ENCODE measurements at regions of chr1 and their contacts with region 1.

Region 1: GRCh38 chr1:9629445-9630201 is 21.9 kb upstream of the PIK3CD start:
- DNase-seq: peak; percentile 84
- H3K4me3 Mint-ChIP-seq: peak overlapping the region; percentile 87
- H3K27ac Mint-ChIP-seq: peak overlapping the region; percentile 97
- H3K4me1 Mint-ChIP-seq: peaks cover 67% of the 10 kb centered on the region
- H3K27me3 Mint-ChIP-seq: peaks cover 2% of the 10 kb centered on the region

Region 2: DNA sequence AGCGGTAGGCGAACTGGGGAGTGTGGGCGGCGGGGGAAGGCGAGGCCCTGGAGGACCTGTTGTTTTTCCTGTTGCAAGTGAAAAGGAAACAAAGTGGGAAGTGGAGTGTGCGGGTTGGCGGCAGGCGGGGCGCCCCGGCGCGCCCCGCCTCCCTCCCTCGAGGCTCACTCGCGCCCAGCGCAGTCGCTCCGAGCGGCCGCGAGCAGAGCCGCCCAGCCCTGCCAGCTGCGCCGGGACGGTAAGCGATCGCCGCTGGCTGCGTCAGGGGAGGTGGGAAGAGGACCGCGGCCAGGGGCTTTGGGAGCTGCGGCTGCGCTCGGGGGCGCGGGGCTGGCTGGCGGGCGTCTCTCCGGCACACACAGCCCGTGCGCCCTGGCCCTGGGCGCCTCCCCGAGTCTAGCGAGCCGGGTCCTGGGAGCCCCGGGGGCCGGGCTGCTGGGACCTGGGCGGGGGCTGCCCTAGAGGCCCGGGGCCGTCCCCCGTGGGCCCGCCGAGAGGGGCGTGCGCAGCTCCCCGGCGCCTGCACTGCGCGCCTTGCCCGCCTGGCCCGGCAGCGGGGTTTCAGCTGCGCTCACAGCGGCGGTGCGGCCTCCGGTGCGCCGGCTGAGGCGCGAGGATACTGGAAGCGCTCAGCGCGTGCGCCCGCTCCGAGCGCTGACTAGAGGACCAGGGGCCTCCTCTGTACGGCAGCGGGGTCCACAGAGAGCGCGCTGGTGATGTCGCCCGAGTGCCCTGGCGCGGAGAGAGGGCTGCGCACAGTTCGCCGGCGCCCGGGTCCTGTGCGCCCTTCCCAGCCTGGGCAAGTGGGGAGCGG is 22.1 kb after region 1 on chr1 and contains the start of gene PIK3CD:
- CTCF ChIA-PET with region 1: interaction called, 144 read pairs
- POLR2A ChIA-PET with region 1: interaction called, 422 read pairs
- DNase-seq: peak; percentile 59
- H3K4me3 Mint-ChIP-seq: peak within 1 kb of the TSS; percentile 96
- H3K27ac Mint-ChIP-seq: peak within 1 kb of the TSS; percentile 98
- H3K4me1 Mint-ChIP-seq: peaks cover 51% of the 10 kb centered on the region
- H3K27me3 Mint-ChIP-seq: no peaks in the 10 kb centered on the region
- total RNA-seq, gene PIK3CD: 211 to 214 TPM

Region 3: DNA sequence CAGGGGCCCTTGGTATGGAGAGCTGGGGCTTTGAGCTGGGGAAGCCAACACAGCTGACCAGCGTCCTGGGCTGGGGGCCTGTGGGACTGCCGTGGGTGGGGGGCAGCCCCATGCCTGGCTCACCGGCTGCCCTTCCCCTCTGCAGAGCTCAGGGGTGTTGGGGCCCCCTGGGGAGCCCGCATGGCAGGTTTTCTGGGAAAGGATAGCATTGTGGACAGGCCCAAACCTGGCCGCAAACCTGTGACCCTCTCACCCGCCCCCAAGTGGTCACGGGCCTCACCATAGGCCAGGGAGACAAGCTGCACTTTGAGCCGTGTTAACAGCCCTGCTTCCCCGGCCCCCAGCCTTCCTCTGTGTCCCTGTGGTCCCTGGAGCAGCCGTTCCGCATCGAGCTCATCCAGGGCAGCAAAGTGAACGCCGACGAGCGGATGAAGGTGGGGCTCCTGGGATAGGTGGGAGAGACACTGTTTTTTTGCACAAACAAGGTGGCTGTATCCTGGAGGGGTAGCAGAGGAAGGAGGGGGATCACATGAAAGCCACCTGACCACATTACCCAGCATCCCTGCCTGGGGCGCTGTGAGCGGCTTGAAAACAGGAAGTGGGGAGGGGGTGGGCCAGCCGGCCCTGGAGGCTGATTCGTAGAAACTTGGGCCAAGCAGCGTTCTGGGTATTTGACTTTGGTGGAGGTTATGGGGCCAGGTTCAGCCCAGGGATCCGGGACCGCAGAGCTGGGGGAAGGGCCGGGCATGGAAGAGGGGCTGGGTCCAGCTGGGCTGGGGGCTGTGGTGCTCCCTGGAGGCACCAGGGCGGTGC is 87.8 kb after region 1 on chr1:
- CTCF ChIA-PET with region 1: interaction called, 89 read pairs
- POLR2A ChIA-PET with region 1: interaction called, 272 read pairs
- DNase-seq: peak; percentile 96
- H3K4me3 Mint-ChIP-seq: peak overlapping the region; percentile 90
- H3K27ac Mint-ChIP-seq: peak overlapping the region; percentile 90
- H3K4me1 Mint-ChIP-seq: peaks cover 69% of the 10 kb centered on the region
- H3K27me3 Mint-ChIP-seq: no peaks in the 10 kb centered on the region

Region 4: DNA sequence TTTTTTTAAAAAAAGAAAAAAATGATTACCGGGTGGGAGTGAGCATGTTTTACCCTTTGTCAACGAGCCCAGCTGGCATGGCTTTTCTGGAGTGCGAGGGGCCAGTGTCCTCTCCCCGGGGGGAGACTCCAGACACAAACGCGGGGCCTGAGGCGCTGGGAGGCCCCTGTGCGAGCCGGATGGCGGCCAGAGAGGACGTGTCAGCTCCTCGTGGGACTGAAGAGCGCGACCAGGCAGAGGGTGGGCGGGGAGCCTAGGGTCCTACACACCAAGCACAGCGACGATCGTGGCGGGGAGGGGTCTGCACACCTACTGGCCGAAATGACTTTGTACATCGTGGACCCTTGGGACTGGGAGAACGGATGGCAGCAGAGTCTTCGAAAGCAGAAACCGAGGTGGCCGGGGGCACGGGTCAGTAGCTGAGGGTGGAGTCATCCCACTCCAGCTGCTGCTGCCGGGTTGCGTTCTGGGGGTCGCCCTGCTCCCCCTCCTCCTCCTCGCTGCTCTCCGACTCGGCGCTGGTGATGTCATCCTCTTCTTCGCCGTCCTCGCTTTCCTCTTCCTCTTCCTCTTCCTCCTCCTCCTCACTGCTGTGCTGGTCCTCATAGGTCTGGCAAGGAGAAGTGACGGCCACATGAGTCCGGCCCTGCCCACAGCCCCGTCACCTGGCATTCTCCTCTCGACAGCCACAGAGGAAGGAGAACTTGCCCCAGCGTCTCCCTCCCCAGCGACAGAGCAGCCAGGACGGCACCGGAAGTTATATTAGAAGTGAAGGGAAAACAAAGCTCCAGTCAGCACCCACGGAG is 100.7 kb after region 1 on chr1:
- CTCF ChIA-PET with region 1: interaction called, 11 read pairs
- POLR2A ChIA-PET with region 1: interaction called, 27 read pairs
- DNase-seq: no peak
- H3K4me3 Mint-ChIP-seq: peak overlapping the region; percentile 39
- H3K27ac Mint-ChIP-seq: peak overlapping the region; percentile 68
- H3K4me1 Mint-ChIP-seq: peaks cover 58% of the 10 kb centered on the region
- H3K27me3 Mint-ChIP-seq: no peaks in the 10 kb centered on the region